B cell (primary cell): ENCODE measurements at regions of chr17 and their contacts with region 1.

Region 1: DNA sequence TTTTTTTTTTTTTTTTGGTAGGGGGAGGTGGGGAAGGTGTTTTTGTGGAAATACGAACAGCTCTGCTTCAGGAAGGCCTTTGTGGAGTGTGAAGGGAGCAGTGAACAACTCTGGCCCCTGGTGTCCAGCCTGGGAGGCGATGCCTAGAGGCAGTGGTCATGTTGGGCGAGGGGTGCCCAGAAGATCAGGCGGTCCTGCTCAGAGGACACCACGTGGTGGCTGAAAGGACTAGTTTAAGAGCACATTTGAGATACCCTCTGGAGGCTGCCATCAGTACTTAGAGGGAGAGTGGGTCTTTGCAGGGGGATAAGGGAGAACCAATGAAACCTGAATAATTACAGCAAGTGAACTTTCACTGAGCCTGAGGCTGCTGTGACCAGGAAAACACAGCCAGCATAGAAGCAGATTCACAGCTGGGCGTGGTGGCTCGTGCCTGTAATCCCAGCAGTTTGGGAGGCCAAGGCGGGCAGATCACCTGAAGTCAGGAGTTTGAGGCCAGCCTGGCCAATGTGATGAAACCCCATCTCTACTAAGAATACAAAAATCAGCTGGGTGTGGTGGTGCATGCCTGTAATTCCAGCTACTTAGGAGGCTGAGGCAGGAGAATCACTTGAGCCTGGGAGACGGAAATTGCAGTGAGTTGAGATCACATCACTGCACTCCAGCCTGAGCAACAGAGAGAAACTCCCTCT is 40.0 kb upstream of the RHOT1 start:
- DNase-seq: no peak
- ATAC-seq: no peak
- H3K4me3 ChIP-seq: no peak overlapping the region
- H3K4me3 Mint-ChIP-seq: no peak overlapping the region
- H3K27ac ChIP-seq: no peak overlapping the region
- H3K27ac Mint-ChIP-seq: no peak overlapping the region
- H3K4me1 ChIP-seq: peaks cover 0 to 3% of the 10 kb centered on the region in 2 donors
- H3K4me1 Mint-ChIP-seq: peaks cover 4% of the 10 kb centered on the region
- H3K27me3 ChIP-seq: no peaks in the 10 kb centered on the region
- H3K27me3 Mint-ChIP-seq: peaks cover 2% of the 10 kb centered on the region
- CTCF ChIP-seq: no peak

Region 2: DNA sequence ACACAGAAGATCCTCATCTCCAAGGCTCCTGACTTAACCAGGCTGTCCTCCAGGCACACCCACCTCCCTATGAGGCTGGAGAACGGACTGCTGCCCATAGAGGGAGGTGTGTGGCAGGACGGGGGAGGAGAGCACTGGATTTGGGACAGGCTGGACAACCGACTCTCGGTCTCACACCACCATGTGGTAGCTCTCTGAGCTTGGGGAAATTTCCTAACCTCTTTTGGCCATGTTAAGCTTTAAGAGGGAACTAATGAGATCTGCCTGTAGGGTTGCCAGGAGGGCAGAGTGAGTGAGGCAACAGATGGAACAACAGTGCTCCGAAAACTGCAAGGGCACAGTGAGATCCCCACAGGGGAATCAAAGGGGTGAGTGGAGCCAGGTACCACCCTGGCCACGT is 196.0 kb after region 1 on chr17:
- CTCF ChIA-PET with region 1: no interaction called
- POLR2A ChIA-PET with region 1: interaction called, 11 read pairs
- intact Hi-C with region 1: no loop called
- DNase-seq: no peak
- ATAC-seq: no peak
- H3K4me3 ChIP-seq: no peak overlapping the region
- H3K4me3 Mint-ChIP-seq: no peak overlapping the region
- H3K27ac ChIP-seq: no peak overlapping the region
- H3K27ac Mint-ChIP-seq: no peak overlapping the region
- H3K4me1 ChIP-seq: no peaks in the 10 kb centered on the region
- H3K4me1 Mint-ChIP-seq: peaks cover 2% of the 10 kb centered on the region
- H3K27me3 ChIP-seq: no peaks in the 10 kb centered on the region
- H3K27me3 Mint-ChIP-seq: peaks cover 5% of the 10 kb centered on the region
- CTCF ChIP-seq: no peak